ENCODE measurements at regions of chr19 and their contacts with region 1.

Region 1: DNA sequence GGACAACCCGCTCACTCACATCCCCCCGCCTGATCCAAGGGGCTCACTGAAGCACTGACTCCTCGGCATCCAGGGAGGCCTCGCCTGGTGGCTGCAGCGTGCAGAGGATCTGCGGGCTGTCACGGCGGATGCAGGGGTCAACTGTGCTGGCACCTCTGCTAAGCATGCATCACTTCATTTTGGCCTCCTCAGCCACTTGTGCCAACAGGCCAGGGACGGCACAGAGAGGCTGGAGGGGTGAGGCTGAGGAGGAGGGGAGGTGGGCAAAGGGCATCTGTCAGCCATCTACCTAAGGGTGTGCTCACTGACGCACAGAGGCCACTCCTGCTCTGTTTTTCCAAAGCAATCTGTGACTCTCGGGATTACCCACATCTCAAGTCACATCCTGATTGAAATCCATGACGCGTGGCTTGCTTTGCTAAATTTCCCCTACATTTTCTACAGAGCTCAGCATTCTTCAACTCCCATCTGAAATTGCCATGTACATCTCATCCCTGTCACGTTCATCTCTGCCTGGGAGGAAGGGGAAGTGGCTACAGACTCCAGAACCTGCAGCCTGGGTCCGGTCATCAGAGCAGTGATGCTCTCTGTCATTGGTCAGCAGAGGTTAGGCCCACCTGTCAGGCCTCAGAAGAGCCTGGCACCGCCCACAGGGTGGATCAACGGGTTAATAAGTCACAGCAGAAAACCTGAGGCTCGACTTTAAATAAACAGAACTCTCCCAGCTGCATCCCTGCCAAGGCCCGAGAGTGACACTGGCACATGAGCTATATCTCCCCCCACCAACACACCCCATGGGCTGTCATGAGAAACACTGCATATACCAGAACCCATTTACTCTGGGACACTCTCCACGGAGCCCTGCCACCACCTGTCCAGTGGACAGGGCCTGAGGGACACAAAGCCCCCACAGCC is 17.6 kb downstream of the ELL start:
- DNase-seq: no peak
- H3K4me3 ChIP-seq: no peak overlapping the region
- H3K27ac ChIP-seq: peak overlapping the region; percentile 81 to 88
- H3K4me1 ChIP-seq: peaks cover 63 to 97% of the 10 kb centered on the region in 2 donors
- H3K27me3 ChIP-seq: no peaks in the 10 kb centered on the region
- CTCF ChIP-seq: no peak

Region 2: GRCh38 chr19:18373892-18374629 is 130.2 kb before region 1 on chr19:
- intact Hi-C with region 1: no loop called
- DNase-seq: peak; percentile 92 to 96
- H3K4me3 ChIP-seq: no peak overlapping the region
- H3K27ac ChIP-seq: peak overlapping the region; percentile 78 to 79
- H3K4me1 ChIP-seq: peaks cover 5 to 16% of the 10 kb centered on the region in 2 donors
- H3K27me3 ChIP-seq: no peaks in the 10 kb centered on the region
- CTCF ChIP-seq: no peak

Region 3: GRCh38 chr19:18464646-18465045 is 39.6 kb before region 1 on chr19:
- intact Hi-C with region 1: loop called (anchors 5 kb)
- DNase-seq: peak; percentile 71 to 93
- H3K4me3 ChIP-seq: no peak overlapping the region
- H3K27ac ChIP-seq: peak overlapping the region; percentile 89 to 94
- H3K4me1 ChIP-seq: peaks cover 23 to 67% of the 10 kb centered on the region in 2 donors
- H3K27me3 ChIP-seq: no peaks in the 10 kb centered on the region
- CTCF ChIP-seq: no peak

Region 4: DNA sequence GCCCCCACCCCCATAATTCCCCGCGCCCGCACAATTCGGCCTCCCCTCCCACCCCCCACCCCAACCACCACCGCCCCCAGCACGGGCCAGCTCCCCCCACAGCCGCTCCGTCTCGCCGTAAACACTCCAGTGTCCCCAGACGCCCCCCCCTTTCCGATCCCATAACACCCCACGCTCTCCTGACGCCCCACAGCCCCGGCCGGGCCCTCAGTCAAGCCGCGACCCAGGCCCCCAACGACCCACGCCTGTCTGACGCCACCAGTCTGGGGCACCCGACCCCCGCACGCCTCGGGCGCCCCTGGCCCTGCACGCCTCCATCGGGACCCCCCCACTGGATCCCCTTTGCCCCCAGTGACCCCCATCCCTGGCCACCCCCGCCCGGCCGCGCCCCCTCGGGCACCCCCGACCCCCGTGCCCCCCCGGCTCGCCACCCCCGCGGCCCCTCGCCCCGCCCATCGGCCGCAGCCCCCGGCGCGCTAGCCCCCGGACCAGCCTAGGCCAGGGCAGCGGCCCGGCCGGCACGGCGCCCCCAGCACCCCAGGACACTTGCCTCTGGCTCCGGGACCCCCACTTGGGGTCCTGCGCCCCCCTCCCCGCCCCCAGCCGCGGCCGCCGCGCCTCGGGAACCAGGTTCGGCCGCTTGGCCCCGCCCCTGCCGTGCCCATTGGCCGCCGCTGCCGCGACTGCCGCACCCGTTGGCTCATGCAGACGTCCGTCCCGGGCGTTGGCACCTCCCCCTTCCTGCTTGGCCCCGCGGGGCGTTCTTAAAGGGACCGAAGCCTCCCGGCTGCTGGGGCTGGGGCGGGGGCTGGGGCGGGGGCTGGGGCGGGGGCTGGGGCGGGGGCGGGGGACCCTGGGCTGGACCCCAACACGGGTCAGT is 38.9 kb after region 1 on chr19 and contains the start of gene FKBP8:
- intact Hi-C with region 1: no loop called
- DNase-seq: peak; percentile 70 to 96
- H3K4me3 ChIP-seq: peak within 1 kb of the TSS; percentile 70 to 85
- H3K27ac ChIP-seq: peak within 1 kb of the TSS; percentile 87 to 88
- H3K4me1 ChIP-seq: peaks cover 4 to 10% of the 10 kb centered on the region in 2 donors
- H3K27me3 ChIP-seq: no peaks in the 10 kb centered on the region
- CTCF ChIP-seq: no peak
- total RNA-seq, gene FKBP8: 395 TPM

Measured in ascending aorta (tissue), 2 donors.